ENCODE measurements at regions of chr14 and their contacts with region 1.

Region 1: DNA sequence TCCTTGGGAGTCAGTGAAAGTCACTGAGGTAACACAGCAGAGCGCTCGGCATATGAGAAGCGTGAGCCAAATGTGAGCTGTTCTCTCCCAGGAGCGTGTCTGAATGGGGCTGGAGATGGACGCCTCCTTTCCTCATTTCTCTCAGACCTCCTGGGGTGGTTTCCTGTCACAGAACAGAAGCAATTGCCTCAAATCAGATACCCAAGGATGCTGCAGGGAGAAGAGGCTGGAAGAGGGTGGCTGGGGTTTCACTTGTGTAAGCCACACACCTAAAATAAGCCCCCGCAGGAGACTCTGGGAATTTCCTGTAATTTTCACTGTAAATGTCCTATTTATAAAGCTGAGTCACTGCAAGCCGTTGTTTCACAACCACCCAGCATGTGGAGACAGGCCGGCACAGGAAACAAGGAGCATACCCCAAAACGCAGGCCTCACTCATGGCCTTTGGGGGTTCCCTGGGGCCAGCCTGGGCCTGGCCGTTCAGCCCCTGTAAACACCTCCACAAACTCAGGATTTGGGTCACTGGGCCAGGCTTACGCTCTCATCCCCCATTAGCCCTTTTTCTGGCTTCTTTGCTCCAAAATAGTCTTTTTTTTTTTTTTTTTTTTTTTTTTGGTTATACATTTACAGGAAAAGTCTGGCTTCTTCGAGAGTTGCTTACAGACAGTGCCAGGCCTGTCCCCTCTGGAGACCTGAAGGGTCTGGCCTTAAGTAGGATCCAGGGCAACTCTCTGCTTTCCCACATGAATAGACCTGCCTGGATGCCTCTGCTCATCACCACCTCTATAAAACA is 55.3 kb downstream of the VCPKMT start:
- DNase-seq: peak; percentile 41
- H3K4me3 ChIP-seq: peak overlapping the region; percentile 65
- H3K27ac ChIP-seq: peak overlapping the region; percentile 93
- H3K4me1 ChIP-seq: peaks cover 61% of the 10 kb centered on the region
- CTCF ChIP-seq: no peak

Region 2: GRCh38 chr14:49852301-49853157 is 208.5 kb before region 1 on chr14 and contains the start of gene NEMF:
- CTCF ChIA-PET with region 1: no interaction called
- POLR2A ChIA-PET with region 1: interaction called, 10 read pairs
- intact Hi-C with region 1: no loop called
- DNase-seq: peak; percentile 93
- H3K4me3 ChIP-seq: peak within 1 kb of the TSS; percentile 93
- H3K27ac ChIP-seq: peak within 1 kb of the TSS; percentile 55
- H3K4me1 ChIP-seq: peaks cover 39% of the 10 kb centered on the region
- CTCF ChIP-seq: peak; percentile 99
- total RNA-seq, gene NEMF: 63.2 and 71.3 TPM in 2 replicates

Region 3: GRCh38 chr14:49879683-49880204 is 181.3 kb before region 1 on chr14:
- CTCF ChIA-PET with region 1: interaction called, 11 read pairs
- POLR2A ChIA-PET with region 1: interaction called, 8 read pairs
- intact Hi-C with region 1: no loop called
- DNase-seq: peak; percentile 90
- H3K4me3 ChIP-seq: peak overlapping the region; percentile 13
- H3K27ac ChIP-seq: peak overlapping the region; percentile 56
- H3K4me1 ChIP-seq: peaks cover 25% of the 10 kb centered on the region
- CTCF ChIP-seq: peak; percentile 83

Region 4: GRCh38 chr14:49930720-49931119 is 130.3 kb before region 1 on chr14:
- CTCF ChIA-PET with region 1: no interaction called
- POLR2A ChIA-PET with region 1: interaction called, 4 read pairs
- intact Hi-C with region 1: loop called (anchors 1 kb)
- DNase-seq: peak; percentile 68
- H3K4me3 ChIP-seq: no peak overlapping the region
- H3K27ac ChIP-seq: peak overlapping the region; percentile 79
- H3K4me1 ChIP-seq: peaks cover 38% of the 10 kb centered on the region
- CTCF ChIP-seq: no peak

Region 5: GRCh38 chr14:49971156-49972130 is 89.6 kb before region 1 on chr14:
- CTCF ChIA-PET with region 1: interaction called, 5 read pairs
- POLR2A ChIA-PET with region 1: interaction called, 20 read pairs
- intact Hi-C with region 1: no loop called
- DNase-seq: peak; percentile 97
- H3K4me3 ChIP-seq: peak overlapping the region; percentile 65
- H3K27ac ChIP-seq: peak overlapping the region; percentile 99
- H3K4me1 ChIP-seq: peaks cover 81% of the 10 kb centered on the region
- CTCF ChIP-seq: no peak

Region 6: DNA sequence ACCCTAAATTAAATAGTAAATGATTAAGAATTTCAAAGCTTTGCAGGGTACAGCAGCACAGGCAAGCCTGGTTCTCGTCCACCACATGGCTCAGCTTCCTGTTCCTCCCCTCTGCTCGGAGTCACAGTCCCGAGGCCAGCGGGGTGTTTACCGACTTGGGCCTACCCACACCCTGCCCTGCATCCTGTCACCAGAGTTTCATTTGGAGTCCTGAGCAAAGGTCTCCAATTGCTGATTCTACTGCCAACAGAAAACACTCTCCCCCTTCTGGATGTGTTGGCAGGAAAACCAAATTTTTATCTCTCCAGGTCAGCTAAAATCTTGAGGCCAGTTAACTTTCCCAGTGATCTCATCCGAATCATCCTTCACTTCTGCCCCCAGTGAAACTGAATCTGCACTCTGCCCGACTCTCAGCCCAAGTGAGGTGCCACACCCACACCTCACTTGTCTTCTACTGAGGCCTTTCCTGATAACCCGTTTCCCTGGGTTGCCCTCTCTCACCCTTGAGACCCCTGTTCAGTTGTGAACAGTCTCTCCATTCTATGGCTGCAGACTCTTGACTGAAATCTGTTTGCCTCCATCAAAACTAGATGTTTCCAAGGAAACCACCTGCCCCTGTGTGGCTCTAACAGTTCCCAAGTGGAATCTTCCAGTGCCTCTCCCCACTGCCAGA is 15.9 kb before region 1 on chr14:
- CTCF ChIA-PET with region 1: no interaction called
- POLR2A ChIA-PET with region 1: interaction called, 13 read pairs
- intact Hi-C with region 1: no loop called
- DNase-seq: peak; percentile 77
- H3K4me3 ChIP-seq: no peak overlapping the region
- H3K27ac ChIP-seq: peak overlapping the region; percentile 11
- H3K4me1 ChIP-seq: peaks cover 40% of the 10 kb centered on the region
- CTCF ChIP-seq: no peak

Region 7: DNA sequence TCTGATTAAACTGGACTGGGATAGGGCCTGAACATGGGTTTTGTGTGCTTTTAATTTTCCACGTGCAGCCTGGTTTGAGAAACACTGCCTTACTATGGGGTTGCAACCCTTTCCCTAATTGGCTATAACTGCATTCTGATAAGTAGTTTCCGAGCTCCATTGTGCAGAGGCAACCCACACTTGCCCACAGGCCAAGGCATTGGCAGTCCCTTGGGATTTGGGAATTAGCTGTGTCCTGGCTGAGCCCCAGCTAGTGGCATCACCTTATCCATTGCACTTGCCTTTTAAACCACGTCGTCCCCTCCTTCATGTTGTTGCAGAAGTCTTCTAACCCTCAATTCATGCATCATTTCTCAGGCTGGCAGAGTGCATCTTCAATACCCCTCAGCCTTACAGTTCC is 45.1 kb after region 1 on chr14:
- CTCF ChIA-PET with region 1: no interaction called
- POLR2A ChIA-PET with region 1: no interaction called
- intact Hi-C with region 1: no loop called
- DNase-seq: no peak
- H3K4me3 ChIP-seq: no peak overlapping the region
- H3K27ac ChIP-seq: no peak overlapping the region
- H3K4me1 ChIP-seq: peaks cover 6% of the 10 kb centered on the region
- CTCF ChIP-seq: no peak

Region 8: DNA sequence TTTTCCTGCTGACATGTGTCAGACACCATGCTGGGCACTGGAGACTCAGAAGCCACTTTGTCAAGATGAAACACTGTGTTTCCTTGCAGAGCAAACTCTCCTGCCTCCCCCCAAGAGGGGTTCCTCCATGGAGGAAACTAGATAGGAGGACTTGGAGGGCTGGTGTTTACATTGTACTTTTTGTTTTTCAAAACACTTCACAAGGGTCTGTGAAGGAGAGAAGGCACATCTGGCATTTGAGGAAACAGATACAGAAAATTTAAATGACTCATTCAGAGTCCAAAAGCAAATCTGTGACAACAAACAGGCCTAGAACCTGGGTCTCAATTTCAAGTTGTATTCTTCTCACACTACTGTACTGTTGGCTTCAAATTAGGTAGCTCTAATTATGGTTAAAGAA is 342.4 kb after region 1 on chr14:
- CTCF ChIA-PET with region 1: no interaction called
- POLR2A ChIA-PET with region 1: no interaction called
- intact Hi-C with region 1: no loop called
- DNase-seq: no peak
- H3K4me3 ChIP-seq: no peak overlapping the region
- H3K27ac ChIP-seq: no peak overlapping the region
- H3K4me1 ChIP-seq: no peaks in the 10 kb centered on the region
- CTCF ChIP-seq: no peak